ENCODE measurements at regions of chr1 and their contacts with region 1.

Region 1: DNA sequence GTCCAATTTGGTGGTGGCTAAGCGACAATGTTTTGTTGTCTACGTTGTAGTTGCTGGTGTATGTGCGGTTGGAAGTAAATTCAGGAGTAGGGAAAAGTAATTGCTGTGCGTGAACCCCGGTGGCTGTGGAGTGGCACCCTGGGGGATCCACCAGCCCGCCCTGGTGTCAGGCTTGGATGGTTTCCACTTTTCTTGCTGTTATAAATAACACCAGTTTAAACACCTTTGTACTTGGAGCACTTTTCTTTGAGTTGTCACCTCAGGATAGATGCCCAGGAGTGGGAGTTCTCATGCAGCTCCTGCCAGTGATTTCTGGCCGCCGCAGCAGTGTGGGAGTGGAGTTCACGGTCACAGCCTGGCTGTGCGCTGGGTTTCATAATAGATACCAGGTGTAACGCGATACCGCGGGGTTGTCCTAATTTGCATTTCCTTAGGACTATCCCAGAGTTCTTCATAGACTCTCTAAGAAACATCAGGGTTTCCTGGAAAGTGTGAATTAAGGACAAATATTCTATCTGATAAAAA is 12.8 kb upstream of the TMEM200B start:
- DNase-seq: no peak
- H3K4me3 ChIP-seq: no peak overlapping the region
- H3K27ac ChIP-seq: no peak overlapping the region
- H3K4me1 ChIP-seq: peaks cover 0 to 9% (median 4%) of the 10 kb centered on the region in 4 experiments
- H3K27me3 ChIP-seq: peaks cover 0 to 22% (median 6%) of the 10 kb centered on the region in 5 experiments

Region 2: DNA sequence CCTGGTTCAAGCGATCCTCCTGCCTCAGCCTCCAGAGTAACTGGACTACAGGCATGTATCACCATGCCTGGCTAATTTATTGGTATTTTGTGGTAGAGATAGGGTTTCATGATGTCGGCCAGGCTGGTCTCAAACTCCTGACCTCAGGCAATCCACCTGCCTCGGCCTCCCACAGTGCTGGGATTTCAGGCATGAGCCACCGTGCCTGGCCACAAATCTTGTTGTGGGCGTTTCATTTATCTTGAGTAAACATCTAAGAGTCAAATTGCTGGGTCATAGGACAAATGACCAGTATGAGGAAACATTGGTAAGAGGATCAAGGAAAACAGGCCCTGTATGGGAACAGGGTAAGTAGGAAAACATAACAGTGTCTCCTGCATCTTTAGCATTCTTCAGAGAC is 30.6 kb before region 1 on chr1:
- CTCF ChIA-PET with region 1: no interaction called
- POLR2A ChIA-PET with region 1: no interaction called
- DNase-seq: no peak
- H3K4me3 ChIP-seq: no peak overlapping the region
- H3K27ac ChIP-seq: no peak overlapping the region
- H3K4me1 ChIP-seq: no peaks in the 10 kb centered on the region
- H3K27me3 ChIP-seq: no peaks in the 10 kb centered on the region

Region 3: DNA sequence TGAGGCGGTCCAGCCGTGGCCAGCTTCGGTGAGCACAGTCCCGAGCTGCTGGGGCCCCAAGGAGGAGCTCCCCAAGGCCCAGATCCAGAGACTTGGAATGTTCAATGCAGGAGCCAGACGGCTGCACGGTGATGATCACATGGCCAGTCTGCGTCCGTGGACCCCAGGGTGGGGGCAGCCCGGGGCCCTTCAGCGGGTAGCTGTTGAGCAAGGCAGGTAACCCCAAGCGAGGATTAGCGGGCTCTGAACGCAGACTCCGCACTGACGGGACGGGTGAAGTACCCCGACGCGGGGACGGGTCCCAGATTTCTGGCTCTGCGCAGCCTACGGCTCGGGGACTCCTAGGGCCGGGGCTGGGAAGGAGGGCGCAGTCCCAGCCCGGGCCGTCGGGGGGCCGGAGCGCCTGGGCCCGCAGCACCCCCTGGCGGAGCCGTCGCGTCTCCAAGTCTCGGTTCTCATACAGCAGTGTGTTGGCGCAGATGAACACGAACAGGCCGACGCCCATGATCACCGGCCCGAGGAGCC is 15.4 kb before region 1 on chr1:
- CTCF ChIA-PET with region 1: interaction called, 10 read pairs
- POLR2A ChIA-PET with region 1: no interaction called
- DNase-seq: peak; percentile 71 to 84 (median 83)
- H3K4me3 ChIP-seq: peak overlapping the region in 1 of 7 experiments; percentile 40
- H3K27ac ChIP-seq: no peak overlapping the region
- H3K4me1 ChIP-seq: peaks cover 0 to 35% (median 26%) of the 10 kb centered on the region in 4 experiments
- H3K27me3 ChIP-seq: peaks cover 0 to 65% (median 14%) of the 10 kb centered on the region in 5 experiments

Region 4: DNA sequence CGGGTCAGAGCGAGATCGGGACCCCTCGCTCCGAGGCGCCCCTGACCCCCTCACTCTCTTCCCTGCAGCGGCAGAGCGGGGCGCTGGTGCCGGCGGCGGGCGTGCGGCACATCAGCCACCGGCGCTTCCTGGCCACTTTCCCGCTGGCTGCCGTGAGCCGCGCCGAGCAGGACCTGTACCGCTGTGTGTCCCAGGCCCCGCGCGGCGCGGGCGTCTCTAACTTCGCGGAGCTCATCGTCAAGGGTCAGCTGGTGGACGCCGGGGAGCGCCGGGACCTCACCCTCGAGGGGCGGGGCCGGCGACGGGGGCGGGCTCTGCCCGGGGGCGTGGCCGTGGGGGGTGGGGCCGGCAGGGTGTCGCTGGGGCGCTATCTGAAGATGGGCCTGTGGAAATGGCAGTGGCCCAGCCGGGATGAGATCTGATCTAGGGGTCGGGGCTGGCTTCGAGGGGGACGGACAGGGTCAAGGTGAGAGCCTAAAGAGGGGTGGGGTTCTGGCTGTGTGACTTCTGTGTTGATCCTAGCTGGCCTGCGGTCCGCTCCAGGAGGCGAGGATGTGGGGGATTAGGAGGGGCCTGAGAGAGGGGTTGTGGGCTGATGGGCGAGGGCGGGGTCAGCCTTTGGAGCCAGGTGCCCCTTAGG is 123.5 kb after region 1 on chr1:
- CTCF ChIA-PET with region 1: no interaction called
- POLR2A ChIA-PET with region 1: no interaction called
- DNase-seq: peak in 2 of 3 donors; percentile 39 to 51
- H3K4me3 ChIP-seq: peak overlapping the region in 6 of 7 experiments; percentile 23 to 66 (median 56)
- H3K27ac ChIP-seq: no peak overlapping the region
- H3K4me1 ChIP-seq: peaks cover 0 to 15% (median 11%) of the 10 kb centered on the region in 4 experiments
- H3K27me3 ChIP-seq: peaks cover 9 to 63% (median 21%) of the 10 kb centered on the region in 5 experiments

Region 5: GRCh38 chr1:29426810-29427209 is 290.4 kb after region 1 on chr1:
- CTCF ChIA-PET with region 1: no interaction called
- POLR2A ChIA-PET with region 1: no interaction called
- DNase-seq: no peak
- H3K4me3 ChIP-seq: no peak overlapping the region
- H3K27ac ChIP-seq: no peak overlapping the region
- H3K4me1 ChIP-seq: no peaks in the 10 kb centered on the region
- H3K27me3 ChIP-seq: peaks cover 0 to 3% (median 0%) of the 10 kb centered on the region in 5 experiments